Cardiac septum (tissue), 1 donor: ENCODE measurements at regions of chr3 and their contacts with region 1.

Region 1: DNA sequence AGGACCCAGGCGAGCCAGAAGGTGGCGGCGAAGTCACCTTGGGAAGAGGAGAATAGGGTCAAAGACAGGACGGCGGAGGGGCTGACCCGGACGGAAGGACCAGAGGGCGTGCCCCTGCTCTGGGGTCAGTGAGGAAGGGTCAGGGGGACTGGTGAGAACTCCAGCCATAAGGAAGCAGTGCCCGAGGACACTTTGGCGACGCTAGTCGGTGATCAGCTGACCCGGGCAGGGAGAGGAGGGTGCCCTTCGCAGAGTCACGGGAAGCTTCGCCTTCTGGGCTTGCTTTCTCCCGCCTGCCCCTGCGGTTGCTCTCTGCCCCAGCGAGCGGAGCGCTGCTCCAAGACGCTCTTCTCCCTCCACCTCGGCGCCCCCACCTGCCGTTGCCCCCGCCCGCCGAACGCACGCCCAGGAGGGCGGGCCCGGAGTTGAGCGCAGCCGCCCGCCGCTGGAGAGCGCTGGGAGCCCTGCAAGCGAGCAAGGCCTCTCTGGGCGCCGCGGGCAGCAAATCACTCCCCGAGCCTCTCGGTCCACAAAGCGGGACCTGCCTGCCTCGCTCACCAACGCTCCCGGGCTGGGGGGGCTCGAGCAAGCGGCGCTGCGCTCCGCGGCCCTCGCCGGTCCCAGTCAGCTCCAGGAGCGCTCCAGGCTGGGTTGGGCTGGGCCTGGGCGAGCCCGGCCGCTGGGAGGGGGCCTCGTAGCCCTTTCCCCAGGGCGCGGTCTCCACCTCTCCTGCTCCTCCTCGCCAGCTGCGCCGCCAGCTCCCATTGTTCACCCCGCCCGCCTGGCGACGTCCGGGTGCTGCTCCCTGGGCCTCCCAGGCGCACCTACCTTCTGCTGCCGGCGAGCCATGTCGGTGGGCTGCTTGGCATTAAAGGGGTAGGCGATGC is 1.2 kb downstream of the CADPS start:
- DNase-seq: peak; percentile 83

Region 2: DNA sequence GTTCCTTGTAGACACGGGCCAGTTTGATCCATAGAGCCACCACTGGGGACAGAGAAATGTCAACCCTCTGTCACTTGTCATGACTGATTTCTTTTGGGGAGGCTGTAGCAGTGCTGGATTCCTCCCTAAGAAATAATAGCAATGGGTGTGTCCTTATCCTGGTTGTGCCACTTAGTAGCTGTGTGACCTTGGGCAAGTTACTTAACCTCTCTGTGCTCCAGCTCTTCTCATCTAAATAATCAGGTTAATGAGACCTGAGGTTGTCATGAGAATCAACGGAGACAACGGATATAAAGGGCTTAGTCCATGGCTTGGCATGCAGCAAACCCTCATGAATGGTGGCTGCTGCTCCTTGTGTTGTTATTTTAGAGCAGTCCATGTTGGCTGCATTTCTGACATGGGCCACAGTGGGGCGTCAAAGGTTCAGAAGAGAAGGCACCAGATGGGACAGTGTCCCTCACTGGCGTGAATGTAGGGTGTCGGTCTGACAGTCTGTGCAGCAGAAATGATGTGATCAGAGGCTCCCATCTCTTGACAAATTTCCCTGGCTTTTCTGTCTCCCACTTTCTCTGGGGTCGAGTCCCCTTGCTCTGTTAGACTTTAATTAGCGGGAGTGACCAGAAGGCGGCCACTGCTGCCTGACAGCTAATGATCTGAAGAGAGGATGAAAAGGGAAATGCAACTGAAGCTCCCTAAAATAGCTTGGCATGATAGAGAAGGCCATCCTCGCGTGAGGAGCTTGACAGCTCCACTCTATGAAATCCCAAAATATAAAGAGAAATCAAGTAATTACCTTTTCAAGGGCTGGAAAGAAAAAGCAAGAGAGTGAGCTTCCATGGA is 208.2 kb before region 1 on chr3:
- intact Hi-C with region 1: loop called (anchors 5 kb)
- DNase-seq: no peak

Region 3: GRCh38 chr3:62727536-62727935 is 146.5 kb before region 1 on chr3:
- intact Hi-C with region 1: no loop called
- DNase-seq: no peak

Region 4: DNA sequence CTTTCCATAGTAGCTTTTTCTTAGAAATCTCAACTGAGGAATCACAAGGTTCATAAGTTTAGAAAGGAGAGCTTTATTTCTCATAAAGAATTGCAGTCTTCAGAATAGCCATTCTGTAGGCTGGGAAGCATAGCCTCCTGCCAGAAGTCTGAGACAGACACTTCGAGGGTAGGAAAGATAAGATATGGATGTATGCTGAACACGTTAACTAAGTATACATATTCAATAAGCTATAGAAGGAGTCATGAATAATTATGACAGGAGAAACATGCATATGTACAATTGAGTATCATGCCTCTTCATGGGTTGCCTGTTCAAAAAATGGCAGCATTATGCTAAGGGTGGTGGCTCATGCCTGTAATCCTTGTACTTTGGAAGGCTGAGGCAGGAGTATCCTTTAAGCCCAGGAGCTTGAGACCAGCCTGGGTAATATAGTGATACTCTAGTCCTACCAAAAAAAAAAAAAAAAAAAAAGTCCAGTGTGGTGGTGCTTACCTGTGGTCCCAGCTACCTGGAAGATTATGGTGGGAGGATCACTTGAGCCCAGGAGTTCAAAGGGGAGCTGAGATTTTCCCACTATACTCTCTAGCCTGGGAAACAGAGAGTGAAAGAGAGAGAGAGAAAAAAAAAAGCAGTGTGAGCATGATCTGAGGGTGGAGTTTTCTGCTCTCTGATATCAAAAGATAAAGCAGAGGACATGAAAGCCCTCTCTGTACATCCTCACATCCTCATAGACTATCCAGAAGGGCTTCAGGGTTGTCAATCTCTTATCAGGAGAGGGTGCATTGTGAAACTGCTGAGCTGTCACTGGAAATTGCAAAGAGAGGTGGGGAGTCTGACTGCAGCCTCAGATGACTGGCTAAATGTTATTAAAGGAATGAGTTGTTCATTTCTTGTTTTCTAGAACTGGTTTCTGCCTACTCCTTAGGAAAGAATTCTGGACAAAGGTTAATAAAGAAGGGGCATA is 24.8 kb after region 1 on chr3:
- intact Hi-C with region 1: no loop called
- DNase-seq: no peak